ENCODE measurements at regions of chrX and their contacts with region 1.

Region 1: GRCh38 chrX:107894038-107894437 is 68.4 kb downstream of the MID2 start:
- DNase-seq: peak; percentile 22
- H3K4me3 Mint-ChIP-seq: no peak overlapping the region
- H3K27ac Mint-ChIP-seq: no peak overlapping the region
- H3K4me1 Mint-ChIP-seq: no peaks in the 10 kb centered on the region
- H3K27me3 Mint-ChIP-seq: no peaks in the 10 kb centered on the region

Region 2: GRCh38 chrX:107454302-107454701 is 439.7 kb before region 1 on chrX:
- CTCF ChIA-PET with region 1: no interaction called
- intact Hi-C with region 1: loop called (anchors 5 kb)
- DNase-seq: peak; percentile 59
- H3K4me3 Mint-ChIP-seq: no peak overlapping the region
- H3K27ac Mint-ChIP-seq: no peak overlapping the region
- H3K4me1 Mint-ChIP-seq: peaks cover 14% of the 10 kb centered on the region
- H3K27me3 Mint-ChIP-seq: peaks cover 32% of the 10 kb centered on the region

Region 3: GRCh38 chrX:107537815-107538214 is 356.2 kb before region 1 on chrX:
- CTCF ChIA-PET with region 1: interaction called, 3 read pairs
- intact Hi-C with region 1: loop called (anchors 1 kb)
- DNase-seq: peak; percentile 68
- H3K4me3 Mint-ChIP-seq: no peak overlapping the region
- H3K27ac Mint-ChIP-seq: no peak overlapping the region
- H3K4me1 Mint-ChIP-seq: no peaks in the 10 kb centered on the region
- H3K27me3 Mint-ChIP-seq: peaks cover 3% of the 10 kb centered on the region

Region 4: GRCh38 chrX:107731831-107732502 is 162.1 kb before region 1 on chrX:
- CTCF ChIA-PET with region 1: no interaction called
- intact Hi-C with region 1: no loop called
- DNase-seq: no peak
- H3K4me3 Mint-ChIP-seq: no peak overlapping the region
- H3K27ac Mint-ChIP-seq: no peak overlapping the region
- H3K4me1 Mint-ChIP-seq: peaks cover 9% of the 10 kb centered on the region
- H3K27me3 Mint-ChIP-seq: no peaks in the 10 kb centered on the region

Measured in activated naive CD4-positive, alpha-beta T cell treated with anti-CD3 and anti-CD28 coated beads for 36 hours (primary cell).